ENCODE measurements at regions of chr10 and their contacts with region 1.

Region 1: GRCh38 chr10:73785221-73785720 is at the start of gene ZSWIM8:
- DNase-seq: peak; percentile 51 to 82
- H3K4me3 ChIP-seq: peak within 1 kb of the TSS; percentile 71 to 96 (median 90)
- H3K27ac ChIP-seq: no peak within 1 kb of the TSS
- H3K4me1 ChIP-seq: peaks cover 2 to 4% (median 3%) of the 10 kb centered on the region in 4 experiments; a peak in 5 of 7 replicates
- H3K27me3 ChIP-seq: no peaks in the 10 kb centered on the region
- CTCF ChIP-seq: peak in 1 of 3 experiments; percentile 2; a peak in 1 of 4 replicates
- EP300 ChIP-seq: no peak
- POLR2A ChIP-seq: no peak
- RAD21 ChIP-seq: no peak
- total RNA-seq, gene ZSWIM8: 44.7 and 49.8 TPM in 2 replicates

Region 2: DNA sequence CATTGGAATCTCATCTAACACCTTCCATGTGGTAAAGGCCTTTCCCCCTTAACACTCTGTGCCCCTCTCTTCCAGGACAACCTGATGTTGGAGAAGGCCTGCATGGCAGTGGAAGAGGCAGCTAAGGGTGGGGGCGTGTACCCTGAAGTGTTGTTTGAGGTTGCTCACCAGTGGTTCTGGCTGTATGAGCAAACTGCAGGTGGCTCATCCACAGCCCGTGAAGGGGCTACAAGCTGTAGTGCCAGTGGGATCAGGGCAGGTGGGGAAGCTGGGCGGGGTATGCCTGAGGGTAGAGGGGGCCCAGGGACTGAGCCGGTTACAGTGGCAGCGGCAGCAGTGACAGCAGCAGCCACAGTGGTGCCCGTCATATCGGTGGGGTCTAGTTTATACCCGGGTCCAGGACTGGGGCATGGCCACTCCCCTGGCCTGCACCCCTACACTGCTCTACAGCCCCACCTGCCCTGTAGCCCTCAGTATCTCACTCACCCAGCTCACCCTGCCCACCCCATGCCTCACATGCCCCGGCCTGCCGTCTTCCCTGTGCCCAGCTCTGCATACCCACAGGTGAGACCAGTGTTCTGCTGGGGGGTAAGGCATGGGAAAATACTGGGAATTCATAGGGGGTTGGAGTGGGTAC is 13.8 kb after region 1 on chr10:
- CTCF ChIA-PET with region 1: interaction called, 5 read pairs
- POLR2A ChIA-PET with region 1: interaction called, 12 read pairs
- DNase-seq: no peak
- H3K4me3 ChIP-seq: no peak overlapping the region
- H3K27ac ChIP-seq: no peak overlapping the region
- H3K4me1 ChIP-seq: no peaks in the 10 kb centered on the region
- H3K27me3 ChIP-seq: no peaks in the 10 kb centered on the region
- CTCF ChIP-seq: no peak
- EP300 ChIP-seq: no peak
- POLR2A ChIP-seq: 0 out of 3 replicates have a peak, but pooled peaks of 1 of the 2 experiments have one; percentile 13
- RAD21 ChIP-seq: no peak

Region 3: DNA sequence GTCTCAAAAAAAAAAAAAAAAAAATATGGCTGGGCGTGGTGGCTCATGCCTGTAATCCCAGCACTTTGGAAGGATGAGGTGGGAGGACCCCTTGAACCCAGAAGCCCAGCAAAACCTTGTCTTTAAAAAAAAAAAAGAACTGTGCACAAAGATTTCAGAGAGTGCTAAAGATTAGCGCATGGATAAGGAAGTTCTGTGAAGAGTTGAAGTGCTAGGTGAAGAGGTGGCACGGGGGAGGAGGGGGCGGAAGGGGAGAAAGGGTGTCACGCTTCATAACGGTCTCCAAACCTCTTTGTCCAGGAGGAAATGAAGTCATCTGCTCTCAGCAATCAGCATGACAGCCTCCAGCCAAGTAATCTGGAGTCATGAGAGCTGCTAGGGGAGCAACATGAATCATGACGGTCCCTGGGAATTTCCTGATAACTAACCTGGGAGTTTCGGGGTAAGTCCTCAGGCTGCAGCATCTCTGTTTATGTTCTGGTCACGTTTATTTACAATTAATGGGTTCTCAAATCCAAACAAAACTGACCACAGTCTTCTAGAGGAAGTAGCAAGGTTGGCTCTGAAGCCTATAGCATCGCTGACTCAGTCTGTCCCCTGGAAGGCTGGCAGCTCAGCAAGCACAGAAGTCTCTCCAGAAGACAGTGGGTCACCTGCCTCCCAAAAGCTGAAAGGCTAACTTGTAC is 123.7 kb after region 1 on chr10:
- CTCF ChIA-PET with region 1: no interaction called
- POLR2A ChIA-PET with region 1: no interaction called
- DNase-seq: no peak
- H3K4me3 ChIP-seq: no peak overlapping the region
- H3K27ac ChIP-seq: no peak overlapping the region
- H3K4me1 ChIP-seq: peaks cover 15 to 30% (median 24%) of the 10 kb centered on the region in 4 experiments
- H3K27me3 ChIP-seq: peaks cover 3 to 19% (median 12%) of the 10 kb centered on the region in 4 experiments; a peak in 6 of 7 replicates
- CTCF ChIP-seq: no peak
- EP300 ChIP-seq: no peak
- POLR2A ChIP-seq: no peak
- RAD21 ChIP-seq: no peak

Measured in H1 (cell line).